A673 (cell line): ENCODE measurements at regions of chr13 and their contacts with region 1.

Region 1: GRCh38 chr13:49567491-49567890 is 17.9 kb downstream of the RCBTB1 start:
- DNase-seq: no peak
- H3K4me3 ChIP-seq: no peak overlapping the region
- H3K27ac ChIP-seq: no peak overlapping the region
- H3K4me1 ChIP-seq: no peaks in the 10 kb centered on the region
- H3K27me3 ChIP-seq: no peaks in the 10 kb centered on the region
- CTCF ChIP-seq: no peak

Region 2: DNA sequence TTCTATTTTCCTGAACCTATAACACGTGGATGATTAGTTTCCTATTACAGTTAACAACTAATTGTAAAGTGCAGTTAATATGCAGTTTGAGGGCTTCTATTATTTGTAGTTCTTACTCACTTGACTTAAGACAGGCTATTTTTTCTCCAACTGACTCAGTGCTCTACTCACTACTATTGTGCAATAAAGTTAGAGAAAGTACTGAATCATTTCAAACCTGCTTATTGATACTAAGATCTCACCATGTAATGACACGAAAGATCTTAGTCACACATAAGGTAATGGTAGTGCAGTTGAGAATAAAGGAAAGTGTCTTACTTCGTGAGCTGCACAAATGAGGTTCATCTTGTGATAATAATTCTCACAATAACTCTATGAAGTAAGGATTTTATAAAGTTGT is 1357.3 kb before region 1 on chr13:
- CTCF ChIA-PET with region 1: no interaction called
- POLR2A ChIA-PET with region 1: interaction called, 16 read pairs
- intact Hi-C with region 1: no loop called
- DNase-seq: no peak
- H3K4me3 ChIP-seq: no peak overlapping the region
- H3K27ac ChIP-seq: no peak overlapping the region
- H3K4me1 ChIP-seq: no peaks in the 10 kb centered on the region
- H3K27me3 ChIP-seq: no peaks in the 10 kb centered on the region
- CTCF ChIP-seq: no peak